ENCODE measurements at regions of chr4 and their contacts with region 1.

Region 1: GRCh38 chr4:167623247-167623583 is 388.9 kb upstream of the SPOCK3 start:
- DNase-seq: no peak
- H3K4me3 ChIP-seq: no peak overlapping the region
- H3K27ac ChIP-seq: no peak overlapping the region
- H3K4me1 ChIP-seq: no peaks in the 10 kb centered on the region
- H3K27me3 ChIP-seq: no peaks in the 10 kb centered on the region
- CTCF ChIP-seq: no peak
- EP300 ChIP-seq: no peak
- POLR2A ChIP-seq: no peak

Region 2: DNA sequence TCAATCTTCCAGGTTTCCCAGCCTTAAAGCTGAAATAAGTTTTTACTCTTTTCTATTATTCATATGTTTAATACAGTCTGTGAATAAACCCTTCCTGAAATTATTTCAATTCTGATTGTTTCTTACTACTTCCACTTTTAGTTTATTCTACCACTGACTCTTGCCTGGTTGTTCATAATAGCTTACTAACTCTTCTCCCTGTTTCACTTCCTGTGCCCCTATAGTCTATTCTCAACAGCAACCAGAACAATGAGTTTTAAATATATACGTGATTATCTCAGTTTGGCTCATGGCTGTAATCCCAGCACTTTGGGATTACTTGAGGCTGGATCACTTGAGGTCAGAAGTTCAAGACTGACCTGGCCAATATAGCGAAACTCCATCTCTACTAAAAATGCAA is 19.0 kb after region 1 on chr4:
- in situ Hi-C with region 1: no loop called
- intact Hi-C with region 1: loop called (anchors 1 kb)
- DNase-seq: no peak
- H3K4me3 ChIP-seq: no peak overlapping the region
- H3K27ac ChIP-seq: no peak overlapping the region
- H3K4me1 ChIP-seq: no peaks in the 10 kb centered on the region
- H3K27me3 ChIP-seq: no peaks in the 10 kb centered on the region
- CTCF ChIP-seq: no peak
- EP300 ChIP-seq: no peak
- POLR2A ChIP-seq: no peak